ENCODE measurements at regions of chrX and their contacts with region 1.

Region 1: DNA sequence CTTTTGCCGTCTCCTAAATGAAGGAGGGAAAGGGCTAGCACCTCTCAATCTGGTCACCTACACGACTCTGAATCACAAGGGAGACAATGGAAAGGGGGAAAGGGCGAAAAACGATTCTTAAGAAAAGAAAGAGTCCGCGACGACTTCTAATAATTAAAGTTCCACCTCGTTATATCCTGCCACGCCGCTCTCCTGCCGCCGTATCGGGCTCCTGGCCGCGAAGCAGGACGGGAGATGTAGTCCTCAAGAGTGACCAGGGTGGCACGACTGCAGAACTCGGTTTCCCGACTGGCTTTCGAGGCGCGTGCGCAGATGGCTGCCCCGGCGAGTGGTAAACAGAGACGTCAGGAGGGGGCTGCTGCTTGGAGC is at the start of gene FOXO4:
- DNase-seq: no peak
- ATAC-seq: peak; percentile 92
- H3K4me3 ChIP-seq: peak within 1 kb of the TSS; percentile 69
- H3K27ac ChIP-seq: peak within 1 kb of the TSS; percentile 24; the same call in 1 of the 2 replicates
- H3K4me1 ChIP-seq: no peaks in the 10 kb centered on the region
- H3K27me3 ChIP-seq: no peaks in the 10 kb centered on the region
- CTCF ChIP-seq: no peak
- EP300 ChIP-seq: no peak
- POLR2A ChIP-seq: peak; percentile 52; the same call in 1 of the 2 replicates
- RAD21 ChIP-seq: no peak
- polyA plus RNA-seq, gene FOXO4: 0.05 to 0.11 TPM

Region 2: GRCh38 chrX:71111141-71111843 is 15.8 kb after region 1 on chrX and contains the start of gene IL2RG:
- CTCF ChIA-PET with region 1: interaction called, 34 read pairs
- POLR2A ChIA-PET with region 1: interaction called, 60 read pairs
- RAD21 ChIA-PET with region 1: interaction called, 28 read pairs
- SMC1A ChIA-PET with region 1: interaction called, 44 read pairs
- in situ Hi-C with region 1: no loop called
- intact Hi-C with region 1: no loop called
- DNase-seq: peak; percentile 87
- ATAC-seq: peak; percentile 88
- H3K4me3 ChIP-seq: peak within 1 kb of the TSS; percentile 84
- H3K27ac ChIP-seq: peak within 1 kb of the TSS; percentile 82
- H3K4me1 ChIP-seq: peaks cover 11% of the 10 kb centered on the region
- H3K27me3 ChIP-seq: no peaks in the 10 kb centered on the region
- CTCF ChIP-seq: no peak
- EP300 ChIP-seq: peak in 1 of 2 experiments; percentile 62; a peak in 1 of 4 replicates
- POLR2A ChIP-seq: peak; percentile 91
- RAD21 ChIP-seq: no peak
- polyA plus RNA-seq, gene IL2RG: 135 to 138 TPM

Region 3: DNA sequence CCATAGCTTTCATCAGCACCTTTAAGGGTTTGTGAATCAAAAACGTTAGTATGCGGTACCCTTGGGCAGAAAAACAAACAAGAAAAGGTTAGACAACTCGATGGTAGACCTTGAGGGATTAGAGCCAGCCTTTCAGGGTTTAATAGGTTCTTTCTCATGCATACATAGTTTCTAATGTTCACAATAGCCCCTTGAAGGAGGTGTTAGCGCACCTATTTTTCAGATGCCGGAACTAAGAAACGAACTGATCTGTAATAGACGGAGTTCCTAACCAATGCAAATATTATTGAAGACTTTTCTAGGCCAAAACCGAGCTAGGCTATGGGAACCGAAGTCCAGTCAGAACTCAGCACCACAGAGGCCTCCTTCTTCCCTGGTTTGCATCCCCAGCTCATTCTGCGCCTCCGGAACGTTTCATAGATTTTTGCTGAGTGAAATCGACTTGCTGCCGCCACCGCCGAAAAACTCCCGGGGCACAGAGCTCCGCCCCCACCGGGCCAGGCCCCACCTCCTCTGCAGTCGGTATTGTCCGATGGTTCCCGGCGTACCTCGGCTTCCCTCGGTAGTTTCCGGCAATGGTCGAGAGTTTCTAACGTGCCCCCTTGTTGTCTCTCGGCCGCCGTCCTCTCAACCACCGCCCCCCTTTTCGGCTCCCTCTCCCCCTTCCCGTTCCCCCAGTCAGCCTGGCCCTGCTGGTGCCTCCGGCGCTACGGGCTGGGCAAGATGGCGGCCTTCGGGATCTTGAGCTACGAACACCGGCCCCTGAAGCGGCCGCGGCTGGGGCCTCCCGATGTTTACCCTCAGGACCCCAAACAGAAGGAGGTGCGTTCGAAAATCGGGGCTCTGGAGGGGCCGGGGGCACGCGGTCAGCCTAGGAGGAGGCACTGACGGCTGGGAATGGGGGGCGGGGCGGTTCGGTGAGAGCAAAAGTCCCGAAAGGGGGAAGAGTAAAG is 22.8 kb after region 1 on chrX and contains the start of gene MED12:
- CTCF ChIA-PET with region 1: interaction called, 34 read pairs
- POLR2A ChIA-PET with region 1: interaction called, 60 read pairs
- RAD21 ChIA-PET with region 1: interaction called, 29 read pairs
- SMC1A ChIA-PET with region 1: interaction called, 44 read pairs
- in situ Hi-C with region 1: no loop called
- intact Hi-C with region 1: no loop called
- DNase-seq: peak; percentile 52
- ATAC-seq: peak; percentile 99
- H3K4me3 ChIP-seq: peak within 1 kb of the TSS; percentile 85
- H3K27ac ChIP-seq: peak within 1 kb of the TSS; percentile 81
- H3K4me1 ChIP-seq: peaks cover 2% of the 10 kb centered on the region; the same call in 1 of the 2 replicates
- H3K27me3 ChIP-seq: no peaks in the 10 kb centered on the region
- CTCF ChIP-seq: no peak
- EP300 ChIP-seq: no peak
- POLR2A ChIP-seq: peak; percentile 67
- RAD21 ChIP-seq: no peak
- polyA plus RNA-seq, gene MED12: 0.68 to 1.7 TPM

Region 4: DNA sequence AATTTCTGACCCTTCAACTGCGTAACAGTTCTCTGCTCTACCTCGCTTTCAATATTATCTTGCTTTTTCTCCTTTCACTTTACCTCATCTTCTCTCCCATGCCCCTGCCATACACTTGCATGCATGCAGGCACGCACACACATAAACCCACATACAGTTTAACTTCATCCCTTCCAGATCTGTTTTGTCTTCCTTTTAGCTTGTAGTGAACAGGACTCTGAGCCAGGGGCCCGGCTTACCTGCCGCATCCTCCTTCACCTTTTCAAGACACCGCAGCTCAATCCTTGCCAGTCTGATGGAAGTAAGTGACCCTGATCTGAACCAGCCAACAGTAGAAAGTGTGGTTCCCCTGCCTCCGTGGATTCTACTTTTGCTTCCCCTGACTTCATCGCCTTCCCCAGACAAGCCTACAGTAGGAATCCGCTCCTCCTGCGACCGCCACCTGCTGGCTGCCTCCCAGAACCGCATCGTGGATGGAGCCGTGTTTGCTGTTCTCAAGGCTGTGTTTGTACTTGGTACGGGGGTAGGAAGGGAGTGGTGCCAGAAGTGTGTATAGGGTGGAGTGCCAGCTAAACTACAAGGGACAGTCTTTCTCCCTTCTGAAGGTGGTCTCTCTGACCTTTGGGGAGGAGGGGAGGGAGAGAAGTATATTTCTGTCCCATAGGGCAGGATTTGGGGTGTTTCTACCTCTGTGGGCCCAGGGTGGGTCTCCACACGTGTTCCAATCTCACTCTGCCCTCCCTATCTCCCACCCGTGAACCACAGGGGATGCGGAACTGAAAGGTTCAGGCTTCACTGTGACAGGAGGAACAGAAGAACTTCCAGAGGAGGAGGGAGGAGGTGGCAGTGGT is 33.6 kb after region 1 on chrX:
- CTCF ChIA-PET with region 1: interaction called, 82 read pairs
- POLR2A ChIA-PET with region 1: interaction called, 4 read pairs
- RAD21 ChIA-PET with region 1: interaction called, 19 read pairs
- SMC1A ChIA-PET with region 1: interaction called, 46 read pairs
- in situ Hi-C with region 1: no loop called
- intact Hi-C with region 1: loop called (anchors 1 kb)
- DNase-seq: no peak
- ATAC-seq: peak; percentile 98
- H3K4me3 ChIP-seq: no peak overlapping the region
- H3K27ac ChIP-seq: no peak overlapping the region
- H3K4me1 ChIP-seq: no peaks in the 10 kb centered on the region
- H3K27me3 ChIP-seq: no peaks in the 10 kb centered on the region
- CTCF ChIP-seq: peak; percentile 84 to 88 (median 88)
- EP300 ChIP-seq: no peak
- POLR2A ChIP-seq: peak; percentile 6; the same call in 1 of the 2 replicates
- RAD21 ChIP-seq: peak; percentile 80

Region 5: GRCh38 chrX:71254092-71254941 is 158.8 kb after region 1 on chrX and contains the start of gene ZMYM3:
- CTCF ChIA-PET with region 1: no interaction called
- POLR2A ChIA-PET with region 1: no interaction called
- RAD21 ChIA-PET with region 1: no interaction called
- SMC1A ChIA-PET with region 1: no interaction called
- in situ Hi-C with region 1: no loop called
- intact Hi-C with region 1: no loop called
- DNase-seq: peak; percentile 24
- ATAC-seq: peak; percentile 93
- H3K4me3 ChIP-seq: peak within 1 kb of the TSS; percentile 89
- H3K27ac ChIP-seq: peak within 1 kb of the TSS; percentile 72
- H3K4me1 ChIP-seq: peaks cover 6% of the 10 kb centered on the region; the same call in 1 of the 2 replicates
- H3K27me3 ChIP-seq: no peaks in the 10 kb centered on the region
- CTCF ChIP-seq: no peak
- EP300 ChIP-seq: no peak
- POLR2A ChIP-seq: peak; percentile 69
- RAD21 ChIP-seq: no peak
- polyA plus RNA-seq, gene ZMYM3: 2.3 to 5.1 TPM

Region 6: GRCh38 chrX:71283403-71284143 is 188.0 kb after region 1 on chrX and contains the start of gene NONO:
- CTCF ChIA-PET with region 1: no interaction called
- POLR2A ChIA-PET with region 1: no interaction called
- RAD21 ChIA-PET with region 1: interaction called, 5 read pairs
- SMC1A ChIA-PET with region 1: interaction called, 3 read pairs
- in situ Hi-C with region 1: no loop called
- intact Hi-C with region 1: loop called (anchors 10 kb)
- DNase-seq: peak; percentile 90
- ATAC-seq: peak; percentile 85
- H3K4me3 ChIP-seq: peak within 1 kb of the TSS; percentile 78
- H3K27ac ChIP-seq: peak within 1 kb of the TSS; percentile 91
- H3K4me1 ChIP-seq: peaks cover 4% of the 10 kb centered on the region
- H3K27me3 ChIP-seq: no peaks in the 10 kb centered on the region
- CTCF ChIP-seq: peak in 1 of 3 experiments; percentile 20; a peak in 1 of 6 replicates
- EP300 ChIP-seq: no peak
- POLR2A ChIP-seq: peak; percentile 88
- RAD21 ChIP-seq: no peak
- polyA plus RNA-seq, gene NONO: 206 to 359 TPM

Measured in GM12878 (cell line).